Activated CD4-positive, alpha-beta T cell treated with anti-CD3 and anti-CD28 coated beads, Interleukin-2, amount 10 ng/mL, durations not matched to agents 24 days and 14 days (primary cell): ENCODE measurements at regions of chr20 and their contacts with region 1.

Region 1: DNA sequence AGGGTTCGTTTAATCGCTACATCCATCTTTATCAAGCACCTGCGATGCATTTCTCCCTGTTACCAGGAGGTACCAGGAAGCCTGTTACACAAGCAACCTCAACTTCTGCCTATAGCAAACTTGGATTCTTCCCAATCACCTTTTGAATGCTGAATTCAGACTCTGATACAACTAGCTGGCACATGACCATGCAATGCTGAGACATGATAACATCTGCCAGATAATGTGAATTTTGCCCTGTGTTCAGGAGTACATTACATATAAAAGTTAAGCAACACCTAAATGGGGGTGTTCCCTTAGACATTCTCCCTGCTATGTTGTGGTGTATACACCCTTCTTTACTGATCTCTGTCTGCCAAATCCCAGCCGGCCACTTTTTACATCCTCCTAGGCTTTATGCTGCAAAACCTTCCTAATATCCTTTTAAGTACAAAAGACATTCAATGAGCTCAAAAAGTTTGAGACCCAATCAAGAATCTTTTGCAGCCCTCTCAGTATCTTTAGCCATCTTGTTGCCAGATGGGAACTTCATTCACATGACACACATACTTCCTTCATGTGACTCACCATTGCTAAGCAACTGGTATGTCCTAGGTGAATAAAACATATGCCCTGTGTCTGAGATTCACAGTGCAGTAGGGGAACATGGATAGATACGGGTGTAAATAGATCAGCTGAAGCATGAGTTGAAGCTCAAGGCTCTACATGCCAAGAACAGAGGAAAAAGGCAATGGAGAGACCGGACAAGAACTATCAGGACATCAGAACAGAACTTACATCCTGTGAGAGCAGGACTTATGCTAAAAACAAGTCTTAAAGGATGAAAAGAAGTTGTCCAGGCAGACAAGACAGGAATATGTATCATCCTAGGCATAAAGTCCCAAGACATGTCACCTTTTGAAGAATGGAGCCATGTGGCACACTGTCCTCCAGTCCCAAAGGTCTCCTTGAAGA is 84.3 kb downstream of the ZHX3 start:
- DNase-seq: no peak
- H3K4me3 Mint-ChIP-seq: peak overlapping the region; percentile 28
- H3K27ac Mint-ChIP-seq: peak overlapping the region; percentile 3
- H3K4me1 Mint-ChIP-seq: peaks cover 28% of the 10 kb centered on the region
- H3K27me3 Mint-ChIP-seq: no peaks in the 10 kb centered on the region

Region 2: DNA sequence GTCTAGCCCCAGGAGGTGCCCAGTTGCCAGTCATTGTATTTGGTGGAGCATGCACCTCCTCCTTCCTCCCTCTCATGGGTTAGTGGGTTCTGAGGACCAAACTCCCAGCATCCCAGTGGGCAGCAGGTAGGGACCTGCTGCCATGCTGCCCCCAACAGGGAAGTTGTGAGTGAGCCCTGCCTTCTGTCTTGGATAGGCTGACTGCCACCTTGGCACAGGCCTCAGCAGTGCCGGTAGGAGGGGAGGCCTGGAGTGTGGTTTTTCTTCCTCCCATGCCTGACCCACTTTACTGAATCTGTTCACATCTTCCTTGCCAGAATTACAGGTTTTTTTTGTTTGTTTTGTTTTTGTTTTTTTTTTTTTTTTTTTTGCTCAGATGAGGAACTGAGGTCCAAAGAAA is 71.4 kb before region 1 on chr20:
- intact Hi-C with region 1: loop called (anchors 1 kb)
- DNase-seq: no peak
- H3K4me3 Mint-ChIP-seq: no peak overlapping the region
- H3K27ac Mint-ChIP-seq: peak overlapping the region; percentile 61
- H3K4me1 Mint-ChIP-seq: peaks cover 66% of the 10 kb centered on the region
- H3K27me3 Mint-ChIP-seq: peaks cover 2% of the 10 kb centered on the region

Region 3: DNA sequence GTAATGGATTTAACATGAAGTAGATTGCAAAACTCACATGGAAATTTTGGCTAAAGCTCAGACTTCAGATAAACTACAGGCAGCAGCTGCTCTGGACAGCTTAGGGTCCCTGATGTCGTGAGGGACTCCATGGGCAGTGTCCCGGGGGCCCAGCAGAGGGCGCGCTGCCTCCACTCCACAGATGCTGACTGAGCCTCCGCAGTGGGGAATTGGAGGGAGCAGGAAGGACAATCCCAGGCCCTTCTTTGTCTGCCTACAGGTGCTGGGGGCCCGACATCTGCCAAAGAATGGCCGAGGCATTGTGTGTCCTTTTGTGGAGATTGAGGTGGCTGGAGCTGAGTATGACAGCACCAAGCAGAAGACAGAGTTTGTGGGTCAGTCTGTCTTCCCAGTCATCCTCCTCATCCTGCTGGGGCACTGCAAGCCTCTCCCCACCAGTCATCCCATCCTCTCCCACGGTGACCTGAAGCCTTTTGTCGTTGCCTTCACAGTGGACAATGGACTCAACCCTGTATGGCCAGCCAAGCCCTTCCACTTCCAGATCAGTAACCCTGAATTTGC is 60.0 kb before region 1 on chr20:
- intact Hi-C with region 1: loop called (anchors 1 kb)
- DNase-seq: peak; percentile 89
- H3K4me3 Mint-ChIP-seq: no peak overlapping the region
- H3K27ac Mint-ChIP-seq: peak overlapping the region; percentile 46
- H3K4me1 Mint-ChIP-seq: peaks cover 18% of the 10 kb centered on the region
- H3K27me3 Mint-ChIP-seq: no peaks in the 10 kb centered on the region

Region 4: DNA sequence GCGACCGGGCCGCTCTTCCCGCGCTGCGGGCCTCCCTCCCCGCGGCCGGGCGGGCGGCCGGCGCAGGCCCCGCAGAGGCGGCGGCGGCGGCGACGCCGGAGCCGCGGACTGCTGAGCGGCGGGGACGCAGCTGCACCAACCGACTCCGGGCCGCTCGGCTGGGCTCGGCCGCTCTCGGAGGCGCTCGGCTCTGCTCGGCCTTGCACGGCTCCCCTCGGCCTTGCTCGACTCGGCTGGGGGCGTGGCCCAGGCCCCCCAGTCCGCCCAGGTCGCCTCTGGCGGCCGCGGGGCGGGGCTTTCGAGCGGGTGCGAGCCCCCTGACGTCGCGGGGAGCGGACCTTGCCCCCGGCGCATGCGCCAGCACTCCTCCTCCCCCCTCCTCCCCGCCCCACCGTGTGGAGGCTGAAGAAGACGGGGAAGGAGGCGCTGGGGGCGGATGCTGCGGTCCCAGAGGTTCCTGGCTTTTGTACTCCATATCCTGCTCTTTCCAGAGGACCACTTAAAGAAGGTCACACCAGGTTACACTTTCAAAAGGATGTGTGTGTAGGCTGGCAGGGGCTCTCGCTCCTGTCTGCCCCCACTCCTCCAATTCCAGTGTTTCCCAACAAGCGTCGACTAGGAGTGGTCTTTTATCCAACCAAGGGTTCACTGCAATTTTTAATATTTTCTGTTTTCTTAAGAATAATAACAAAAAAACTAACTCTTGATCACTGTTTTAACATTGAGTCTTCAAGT is 84.5 kb after region 1 on chr20 and contains the start of gene ZHX3:
- intact Hi-C with region 1: no loop called
- DNase-seq: peak; percentile 99
- H3K4me3 Mint-ChIP-seq: peak within 1 kb of the TSS; percentile 88
- H3K27ac Mint-ChIP-seq: peak within 1 kb of the TSS; percentile 87
- H3K4me1 Mint-ChIP-seq: peaks cover 20% of the 10 kb centered on the region
- H3K27me3 Mint-ChIP-seq: peaks cover 8% of the 10 kb centered on the region
- total RNA-seq, gene ZHX3: 11.2 and 11.7 TPM in 2 replicates

Region 5: DNA sequence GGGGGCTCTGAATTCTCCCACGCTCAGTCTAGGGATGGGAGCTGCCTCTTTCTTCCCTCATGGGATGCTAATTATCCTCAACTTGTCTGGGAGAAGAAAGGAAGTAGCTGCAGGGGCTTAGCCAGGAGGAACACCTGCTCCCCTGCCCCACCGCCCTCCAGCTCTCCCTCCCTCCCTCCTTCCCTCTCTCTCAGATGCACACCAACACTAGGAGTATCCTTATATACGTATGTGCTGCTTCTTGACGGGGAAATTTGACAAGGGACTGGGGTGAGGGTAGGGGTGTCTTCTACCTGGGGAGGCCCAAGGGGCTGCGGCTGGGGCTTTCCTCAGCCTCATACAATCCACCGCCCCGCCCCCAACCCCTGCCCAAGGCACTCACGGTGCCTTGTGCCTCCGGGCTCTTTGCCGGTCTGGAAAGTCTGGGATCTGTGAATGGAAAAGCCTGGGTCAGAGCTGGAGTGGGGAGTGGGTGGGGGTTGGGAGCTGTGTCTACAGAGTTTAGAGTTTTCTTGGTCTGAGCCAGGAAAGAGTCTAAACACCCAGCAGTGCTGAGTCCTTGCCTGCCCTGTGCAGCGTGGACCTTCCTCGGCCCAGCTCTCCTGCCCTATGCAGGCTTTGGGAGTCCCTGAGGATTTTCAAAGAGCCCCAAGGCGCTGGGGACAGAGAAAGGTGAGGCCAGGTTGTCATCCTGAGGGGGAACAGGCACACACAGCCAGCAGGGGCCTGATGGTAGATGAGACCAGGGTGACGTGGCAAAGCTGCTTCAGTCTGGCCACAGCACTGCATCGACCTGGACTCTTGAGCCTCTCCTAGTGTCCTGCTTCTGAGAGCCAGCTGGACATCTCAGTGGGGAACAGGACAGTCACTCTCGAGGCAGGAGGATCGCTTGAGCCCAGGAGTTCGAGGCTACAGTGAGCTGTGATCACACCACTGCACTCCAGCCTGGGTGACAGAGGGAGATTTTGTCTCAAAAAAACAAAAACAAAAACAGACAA is 162.7 kb after region 1 on chr20:
- intact Hi-C with region 1: no loop called
- DNase-seq: no peak
- H3K4me3 Mint-ChIP-seq: no peak overlapping the region
- H3K27ac Mint-ChIP-seq: peak overlapping the region; percentile 26
- H3K4me1 Mint-ChIP-seq: no peaks in the 10 kb centered on the region
- H3K27me3 Mint-ChIP-seq: no peaks in the 10 kb centered on the region